Activated CD8-positive, alpha-beta T cell treated with anti-CD3 and anti-CD28 coated beads, Interleukin-2, amount 10 ng/mL, durations not matched to agents 7 days and 5 days (primary cell): ENCODE measurements at regions of chrX and their contacts with region 1.

Region 1: DNA sequence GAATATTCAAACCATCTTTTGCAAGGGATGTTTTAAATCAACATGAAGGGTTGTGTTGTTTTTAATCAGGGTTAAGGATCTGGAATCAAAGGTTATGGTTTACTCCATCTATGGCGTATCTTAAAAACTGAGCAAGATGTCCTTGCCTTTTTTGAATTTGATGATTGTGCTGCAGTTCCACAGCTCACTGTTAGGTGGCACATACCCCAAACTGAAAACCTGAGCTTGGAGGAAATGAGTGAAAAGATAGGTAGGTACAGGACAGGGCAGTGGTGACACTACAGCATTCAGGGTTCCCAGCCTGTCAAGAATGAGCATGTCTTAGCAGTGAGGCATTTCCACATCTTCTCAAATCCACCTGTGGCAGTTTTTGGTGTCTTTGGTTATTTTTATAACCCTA is 13.1 kb upstream of the EOLA1 start:
- DNase-seq: peak; percentile 47
- ATAC-seq: no peak
- H3K4me3 Mint-ChIP-seq: no peak overlapping the region
- H3K27ac Mint-ChIP-seq: peak overlapping the region; percentile 54
- H3K4me1 Mint-ChIP-seq: peaks cover 27% of the 10 kb centered on the region
- H3K27me3 Mint-ChIP-seq: no peaks in the 10 kb centered on the region

Region 2: GRCh38 chrX:148670277-148670676 is 857.4 kb before region 1 on chrX:
- CTCF ChIA-PET with region 1: no interaction called
- POLR2A ChIA-PET with region 1: no interaction called
- DNase-seq: no peak
- ATAC-seq: no peak
- H3K4me3 Mint-ChIP-seq: no peak overlapping the region
- H3K27ac Mint-ChIP-seq: no peak overlapping the region
- H3K4me1 Mint-ChIP-seq: no peaks in the 10 kb centered on the region
- H3K27me3 Mint-ChIP-seq: no peaks in the 10 kb centered on the region

Region 3: DNA sequence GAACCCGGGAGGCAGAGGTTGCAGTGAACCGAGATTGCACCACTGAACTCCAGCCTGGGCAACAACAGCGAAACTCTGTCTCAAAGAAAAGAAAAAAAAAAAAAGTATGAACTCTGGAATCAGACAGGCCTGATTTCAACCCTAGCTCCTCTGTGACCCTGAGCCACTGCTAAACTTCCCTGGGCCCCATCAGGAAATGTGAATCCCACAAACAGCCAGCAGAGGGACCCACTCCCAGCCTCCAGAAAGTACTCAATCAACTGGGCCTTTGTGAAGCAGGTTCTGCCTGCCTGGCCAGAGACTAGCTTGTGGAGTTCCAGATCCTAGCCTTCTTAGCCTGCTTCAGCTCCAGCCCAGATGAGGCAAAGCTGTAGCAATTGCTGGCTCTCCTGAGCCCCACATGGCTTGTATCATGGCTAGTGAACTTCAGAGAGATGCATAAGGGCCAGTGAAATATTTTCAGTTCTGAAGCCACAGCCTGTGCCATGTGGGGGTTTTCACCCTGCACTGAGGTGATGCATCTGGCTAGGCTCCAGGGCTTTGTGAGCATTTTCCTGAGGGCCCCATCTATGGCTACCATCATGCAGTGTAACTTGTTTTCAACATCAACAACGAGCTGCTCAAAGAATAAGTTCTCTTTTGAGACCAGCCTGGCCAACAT is 15.3 kb before region 1 on chrX:
- CTCF ChIA-PET with region 1: interaction called, 46 read pairs
- POLR2A ChIA-PET with region 1: interaction called, 4 read pairs
- DNase-seq: peak; percentile 67
- ATAC-seq: peak; percentile 72
- H3K4me3 Mint-ChIP-seq: no peak overlapping the region
- H3K27ac Mint-ChIP-seq: peak overlapping the region; percentile 76
- H3K4me1 Mint-ChIP-seq: peaks cover 54% of the 10 kb centered on the region
- H3K27me3 Mint-ChIP-seq: no peaks in the 10 kb centered on the region

Region 4: DNA sequence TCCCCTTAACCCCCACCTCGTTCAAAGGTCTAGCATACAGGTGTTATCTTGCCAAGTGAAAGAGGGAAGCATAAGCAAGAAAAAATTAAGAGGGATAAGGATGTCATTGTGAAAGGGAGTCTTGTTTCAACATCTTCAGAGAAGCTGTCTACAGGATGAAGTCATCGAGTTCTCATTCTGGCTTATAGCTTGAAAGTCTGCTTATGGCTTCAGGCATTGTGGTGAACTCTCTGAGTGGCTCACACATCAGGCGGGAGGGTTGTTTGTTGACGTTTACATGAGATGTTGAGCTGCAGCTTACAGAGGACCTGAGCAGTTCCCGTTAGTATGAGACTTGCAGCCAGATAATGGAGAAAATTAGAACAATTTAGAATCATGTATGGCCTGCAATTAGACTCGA is 43.0 kb after region 1 on chrX:
- CTCF ChIA-PET with region 1: no interaction called
- POLR2A ChIA-PET with region 1: no interaction called
- DNase-seq: no peak
- ATAC-seq: no peak
- H3K4me3 Mint-ChIP-seq: no peak overlapping the region
- H3K27ac Mint-ChIP-seq: no peak overlapping the region
- H3K4me1 Mint-ChIP-seq: peaks cover 20% of the 10 kb centered on the region
- H3K27me3 Mint-ChIP-seq: no peaks in the 10 kb centered on the region